Caco-2 (cell line): ENCODE measurements at regions of chr4 and their contacts with region 1.

Region 1: GRCh38 chr4:121950212-121950679 is 1.6 kb downstream of the TRPC3 start:
- DNase-seq: peak; percentile 83 to 91
- H3K4me3 ChIP-seq: peak overlapping the region; percentile 61
- H3K4me3 Mint-ChIP-seq: peak overlapping the region; percentile 80
- H3K27ac Mint-ChIP-seq: no peak overlapping the region
- H3K4me1 ChIP-seq: peaks cover 3% of the 10 kb centered on the region; the same call in 1 of the 2 replicates
- H3K4me1 Mint-ChIP-seq: no peaks in the 10 kb centered on the region
- H3K27me3 ChIP-seq: no peaks in the 10 kb centered on the region
- H3K27me3 Mint-ChIP-seq: peaks cover 18% of the 10 kb centered on the region
- CTCF ChIP-seq: peak; percentile 77 to 83

Region 2: DNA sequence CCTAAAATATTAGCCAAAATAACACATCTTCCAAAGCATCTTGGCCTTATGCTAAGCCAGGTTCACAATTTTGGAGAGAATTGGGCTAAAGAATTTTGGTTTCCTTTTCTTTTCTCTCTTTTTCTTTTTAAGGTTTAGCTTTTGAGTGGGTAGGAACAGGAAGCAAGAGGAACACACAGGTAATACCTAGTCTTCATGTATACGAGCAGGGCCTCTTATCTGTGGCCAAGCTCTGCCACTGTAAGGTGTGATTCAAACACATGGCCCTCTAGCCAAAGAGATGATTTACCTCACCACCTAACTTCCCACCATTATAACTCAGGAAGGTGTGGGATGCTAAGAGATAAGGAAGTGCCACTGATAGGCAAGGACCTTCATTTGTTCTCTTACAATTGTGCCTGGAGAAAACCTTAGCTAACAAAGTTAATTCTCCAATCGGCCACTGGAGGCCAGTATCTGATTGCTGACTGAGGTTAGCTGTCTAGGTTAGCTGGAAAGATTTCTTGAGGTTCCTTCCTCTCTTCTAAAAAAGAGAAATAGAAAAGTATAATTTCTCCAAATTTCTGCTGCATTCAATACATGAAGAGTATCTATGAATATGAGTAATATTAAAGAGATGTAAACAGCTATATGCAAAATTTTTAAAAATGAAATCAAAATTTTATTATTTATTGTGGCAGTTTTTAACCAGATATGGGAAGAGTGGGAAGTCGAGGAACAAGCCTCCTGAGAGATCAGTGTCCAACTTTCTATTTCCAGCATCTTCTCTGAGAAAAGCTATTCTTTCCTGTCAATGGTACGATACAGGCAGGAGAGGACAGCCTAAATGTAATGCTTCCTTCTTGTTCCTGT is 49.9 kb before region 1 on chr4:
- CTCF ChIA-PET with region 1: interaction called, 3 read pairs
- POLR2A ChIA-PET with region 1: no interaction called
- intact Hi-C with region 1: loop called (anchors 1 kb)
- DNase-seq: peak; percentile 44 to 62
- H3K4me3 ChIP-seq: no peak overlapping the region
- H3K4me3 Mint-ChIP-seq: no peak overlapping the region
- H3K27ac Mint-ChIP-seq: no peak overlapping the region
- H3K4me1 ChIP-seq: no peaks in the 10 kb centered on the region
- H3K4me1 Mint-ChIP-seq: no peaks in the 10 kb centered on the region
- H3K27me3 ChIP-seq: no peaks in the 10 kb centered on the region
- H3K27me3 Mint-ChIP-seq: peaks cover 5% of the 10 kb centered on the region
- CTCF ChIP-seq: peak; percentile 73 to 74

Region 3: GRCh38 chr4:122003335-122003734 is 53.1 kb after region 1 on chr4:
- CTCF ChIA-PET with region 1: interaction called, 9 read pairs
- POLR2A ChIA-PET with region 1: no interaction called
- intact Hi-C with region 1: loop called (anchors 1 kb)
- DNase-seq: peak; percentile 83 to 87
- H3K4me3 ChIP-seq: no peak overlapping the region
- H3K4me3 Mint-ChIP-seq: peak overlapping the region; percentile 64
- H3K27ac Mint-ChIP-seq: peak overlapping the region; percentile 42
- H3K4me1 ChIP-seq: peaks cover 7% of the 10 kb centered on the region
- H3K4me1 Mint-ChIP-seq: peaks cover 7% of the 10 kb centered on the region
- H3K27me3 ChIP-seq: no peaks in the 10 kb centered on the region
- H3K27me3 Mint-ChIP-seq: peaks cover 3% of the 10 kb centered on the region
- CTCF ChIP-seq: peak; percentile 55 to 59

Region 4: DNA sequence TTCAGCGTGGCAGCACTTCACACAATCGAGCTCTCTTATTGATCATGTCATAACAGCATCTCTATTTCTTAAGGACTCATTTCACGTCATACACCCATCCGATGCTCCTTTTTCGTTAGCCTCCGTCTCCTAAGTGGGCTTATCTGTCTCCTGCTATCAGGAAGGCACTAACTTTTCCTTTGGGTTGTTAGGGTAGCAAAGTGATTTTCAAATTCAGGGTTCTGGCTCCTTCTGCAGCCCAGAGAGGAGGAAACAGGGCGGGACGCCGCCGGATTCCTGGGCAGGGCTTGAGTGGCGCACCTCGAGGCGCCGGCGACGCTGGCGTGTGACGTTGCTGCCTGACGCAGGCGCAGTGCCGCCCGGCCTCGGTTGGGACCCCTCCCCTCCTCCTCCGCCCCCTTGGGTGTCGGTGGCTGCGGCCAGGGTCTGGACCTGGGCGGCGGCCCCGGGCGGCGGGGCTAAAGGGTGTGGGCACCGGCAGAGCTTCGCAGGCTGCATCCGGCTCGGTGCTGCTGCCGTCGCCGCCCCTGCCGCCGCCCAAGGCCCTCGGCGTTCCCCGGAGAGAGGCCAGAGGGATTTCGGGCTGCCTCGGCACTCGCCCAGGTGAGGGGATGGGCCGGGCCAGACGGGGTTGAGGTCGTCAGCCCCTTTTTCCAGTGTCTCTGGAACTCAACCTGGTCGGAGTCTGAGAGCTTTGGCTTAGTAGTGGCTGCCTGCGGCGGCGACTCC is 201.9 kb after region 1 on chr4 and contains the start of gene BLTP1:
- CTCF ChIA-PET with region 1: no interaction called
- POLR2A ChIA-PET with region 1: no interaction called
- intact Hi-C with region 1: loop called (anchors 1 kb)
- DNase-seq: peak; percentile 90 to 94
- H3K4me3 ChIP-seq: peak within 1 kb of the TSS; percentile 81
- H3K4me3 Mint-ChIP-seq: peak within 1 kb of the TSS; percentile 86
- H3K27ac Mint-ChIP-seq: peak within 1 kb of the TSS; percentile 90
- H3K4me1 ChIP-seq: 0 out of 2 replicates have a peak, but pooled peaks cover 5% of the 10 kb centered on the region
- H3K4me1 Mint-ChIP-seq: no peaks in the 10 kb centered on the region
- H3K27me3 ChIP-seq: no peaks in the 10 kb centered on the region
- H3K27me3 Mint-ChIP-seq: peaks cover 2% of the 10 kb centered on the region
- CTCF ChIP-seq: no peak
- total RNA-seq, gene BLTP1: 29.5 and 32.0 TPM in 2 replicates